ENCODE measurements at regions of chr16 and their contacts with region 1.

Region 1: DNA sequence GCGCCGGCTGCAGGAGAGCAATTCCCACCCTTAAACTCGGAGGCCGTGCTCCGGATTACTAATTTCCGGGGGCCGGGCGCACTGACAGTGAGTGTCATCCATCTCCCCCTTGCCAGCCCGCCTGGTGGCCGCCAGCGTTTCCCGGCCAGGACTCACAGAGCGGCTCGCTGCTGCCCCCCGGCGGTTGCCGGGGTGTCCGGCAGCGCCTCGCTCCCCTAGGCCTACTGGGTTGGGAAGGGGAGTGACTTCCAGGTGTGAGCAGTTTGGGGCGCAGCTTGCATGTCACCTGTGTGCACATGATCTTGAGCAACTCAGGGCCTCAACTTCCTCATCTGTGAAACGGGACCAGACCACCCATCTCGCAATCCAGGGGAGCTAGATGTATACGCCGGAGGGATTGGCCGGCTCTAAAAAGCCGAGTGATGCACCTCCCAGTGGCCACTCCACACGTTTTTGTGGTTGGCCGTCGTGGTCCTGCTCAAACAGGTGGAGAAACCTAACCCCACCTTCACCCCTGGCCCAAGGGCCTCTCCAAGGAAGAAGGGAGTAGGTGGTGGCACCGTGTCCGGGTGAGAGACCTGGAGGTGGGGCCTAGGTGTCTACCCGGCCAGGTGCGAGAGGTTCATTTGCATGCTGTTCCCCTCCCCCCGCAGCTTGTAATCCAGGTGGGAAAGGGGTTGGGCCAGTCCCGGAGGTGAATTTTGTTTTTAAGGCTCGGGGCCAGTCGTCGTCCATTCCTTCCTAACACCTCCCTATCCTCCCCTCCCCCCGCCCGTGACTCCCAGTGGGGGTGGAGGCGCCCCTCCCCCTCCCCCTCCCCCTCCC is 2.4 kb upstream of the GSE1 start:
- DNase-seq: peak; percentile 83
- H3K27ac ChIP-seq: peak overlapping the region; percentile 98
- CTCF ChIP-seq: peak; percentile 97

Region 2: DNA sequence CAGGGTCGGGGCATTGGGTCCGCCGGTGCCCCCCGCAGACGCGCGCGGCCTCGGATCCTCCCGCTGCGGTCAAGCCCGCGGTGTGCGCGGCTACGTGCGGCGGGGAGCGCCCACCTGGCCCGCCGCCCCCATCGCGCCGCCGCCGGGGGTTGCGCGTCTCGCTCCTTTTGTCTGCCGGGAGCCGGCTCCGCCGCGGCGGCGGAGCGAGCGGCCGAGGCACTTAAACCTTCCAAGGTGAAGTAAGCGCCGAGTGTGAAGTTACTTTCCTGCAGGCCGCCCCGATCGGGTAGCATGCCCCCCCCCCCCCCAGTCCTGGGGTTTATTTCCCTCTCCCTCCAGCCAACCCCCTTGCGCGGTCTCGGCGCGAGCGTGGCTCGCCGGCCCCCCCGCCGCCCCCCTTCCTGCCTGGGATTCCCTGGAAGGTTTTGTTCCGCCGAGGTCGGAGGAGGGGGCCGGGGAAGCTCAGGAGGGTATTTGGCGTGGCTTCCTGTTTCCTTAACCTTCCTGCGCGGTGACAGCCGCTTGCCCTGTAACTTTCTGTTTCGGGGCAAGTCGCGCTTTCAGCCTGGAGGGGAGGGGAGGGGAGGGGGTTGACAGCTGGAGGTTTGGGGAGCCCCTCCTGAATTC is 54.2 kb before region 1 on chr16:
- CTCF ChIA-PET with region 1: interaction called, 24 read pairs
- POLR2A ChIA-PET with region 1: interaction called, 4 read pairs
- DNase-seq: peak; percentile 71
- H3K27ac ChIP-seq: peak overlapping the region; percentile 99
- CTCF ChIP-seq: no peak

Region 3: DNA sequence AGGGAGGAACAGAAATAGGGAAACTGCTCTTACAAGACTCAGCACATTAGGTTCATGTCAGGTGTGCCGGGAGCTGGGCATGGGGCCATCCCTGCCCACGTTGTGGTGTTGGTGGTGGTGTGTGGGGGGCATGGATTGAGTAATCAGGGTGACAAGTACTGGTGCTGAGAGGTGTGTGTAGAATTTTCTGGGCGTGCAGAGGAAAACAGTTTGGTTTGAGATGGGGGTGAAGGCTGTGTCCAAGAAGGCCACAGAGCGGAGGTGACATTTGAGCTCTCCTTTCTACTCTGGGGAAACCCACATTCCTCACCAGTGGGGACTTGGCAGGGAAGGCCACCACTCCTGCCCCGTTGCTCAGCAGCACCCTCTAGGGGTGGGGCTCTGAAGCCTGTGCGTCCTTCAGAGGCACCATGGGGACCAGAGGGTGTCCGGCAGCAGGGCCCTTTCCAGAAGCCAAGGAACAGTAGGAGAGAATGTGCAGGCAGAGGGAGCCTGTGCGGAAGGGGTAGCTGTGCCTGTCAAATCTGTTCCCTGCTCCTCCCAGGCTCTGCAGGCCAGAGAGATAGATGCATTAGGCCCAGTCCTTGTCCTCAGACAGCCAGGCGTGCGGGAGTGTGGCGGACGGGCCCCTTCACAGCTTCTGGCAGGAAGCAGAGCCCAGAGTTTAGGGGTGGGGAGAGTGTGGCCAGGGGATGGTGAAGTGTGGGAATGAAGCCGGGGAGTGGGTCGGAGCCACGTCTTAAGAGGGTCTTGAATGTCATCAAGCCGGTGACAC is 46.3 kb before region 1 on chr16:
- CTCF ChIA-PET with region 1: interaction called, 24 read pairs
- POLR2A ChIA-PET with region 1: interaction called, 3 read pairs
- DNase-seq: no peak
- H3K27ac ChIP-seq: peak overlapping the region; percentile 40
- CTCF ChIP-seq: peak; percentile 51

Region 4: GRCh38 chr16:85812031-85812793 is 201.5 kb after region 1 on chr16:
- CTCF ChIA-PET with region 1: no interaction called
- POLR2A ChIA-PET with region 1: no interaction called
- DNase-seq: no peak
- H3K27ac ChIP-seq: no peak overlapping the region
- CTCF ChIP-seq: no peak

Measured in RWPE1 (cell line).